Activated CD4-positive, alpha-beta memory T cell treated with anti-CD3 and anti-CD28 coated beads for 36 hours (primary cell): ENCODE measurements at regions of chr17 and their contacts with region 1.

Region 1: DNA sequence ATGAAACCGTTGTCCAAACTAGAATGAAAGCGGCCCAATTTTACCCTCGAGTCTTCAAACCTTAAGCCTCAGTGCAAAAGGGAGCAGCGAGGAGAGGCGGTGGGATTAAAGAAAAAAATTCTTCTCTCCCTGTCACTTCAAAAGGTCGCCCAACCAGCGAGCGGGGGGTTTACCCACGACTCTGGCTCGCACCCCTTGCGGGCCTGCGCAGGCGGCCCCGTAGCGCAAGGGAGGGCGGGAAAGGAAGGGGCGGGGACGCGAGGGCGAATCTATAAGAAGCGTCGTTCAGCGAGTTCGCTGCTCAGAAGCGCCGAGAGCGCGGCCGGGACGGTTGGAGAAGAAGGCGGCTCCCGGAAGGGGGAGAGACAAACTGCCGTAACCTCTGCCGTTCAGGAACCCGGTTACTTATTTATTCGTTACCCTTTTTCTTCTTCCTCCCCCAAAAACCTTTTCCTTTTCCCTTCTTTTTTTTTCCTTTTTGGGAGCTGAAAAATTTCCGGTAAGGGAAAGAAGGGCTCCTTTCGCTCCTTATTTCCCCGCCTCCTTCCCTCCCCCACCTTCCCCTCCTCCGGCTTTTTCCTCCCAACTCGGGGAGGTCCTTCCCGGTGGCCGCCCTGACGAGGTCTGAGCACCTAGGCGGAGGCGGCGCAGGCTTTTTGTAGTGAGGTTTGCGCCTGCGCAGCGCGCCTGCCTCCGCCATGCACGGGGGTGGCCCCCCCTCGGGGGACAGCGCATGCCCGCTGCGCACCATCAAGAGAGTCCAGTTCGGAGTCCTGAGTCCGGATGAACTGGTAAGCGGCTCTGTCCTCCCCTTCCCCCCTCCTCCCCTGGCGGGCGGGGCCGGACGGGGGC is at the start of gene POLR2A:
- DNase-seq: peak; percentile 97
- H3K4me3 Mint-ChIP-seq: peak within 1 kb of the TSS; percentile 98
- H3K27ac Mint-ChIP-seq: peak within 1 kb of the TSS; percentile 100
- H3K4me1 Mint-ChIP-seq: peaks cover 69% of the 10 kb centered on the region
- H3K27me3 Mint-ChIP-seq: no peaks in the 10 kb centered on the region
- total RNA-seq, gene POLR2A: 180 to 187 TPM

Region 2: GRCh38 chr17:7239091-7240027 is 244.9 kb before region 1 on chr17 and contains the start of gene PHF23:
- CTCF ChIA-PET with region 1: no interaction called
- POLR2A ChIA-PET with region 1: no interaction called
- intact Hi-C with region 1: loop called (anchors 1 kb)
- DNase-seq: peak; percentile 99
- H3K4me3 Mint-ChIP-seq: peak within 1 kb of the TSS; percentile 94
- H3K27ac Mint-ChIP-seq: peak within 1 kb of the TSS; percentile 97
- H3K4me1 Mint-ChIP-seq: peaks cover 59% of the 10 kb centered on the region
- H3K27me3 Mint-ChIP-seq: peaks cover 4% of the 10 kb centered on the region
- total RNA-seq, gene PHF23: 24.0 to 28.7 TPM

Region 3: DNA sequence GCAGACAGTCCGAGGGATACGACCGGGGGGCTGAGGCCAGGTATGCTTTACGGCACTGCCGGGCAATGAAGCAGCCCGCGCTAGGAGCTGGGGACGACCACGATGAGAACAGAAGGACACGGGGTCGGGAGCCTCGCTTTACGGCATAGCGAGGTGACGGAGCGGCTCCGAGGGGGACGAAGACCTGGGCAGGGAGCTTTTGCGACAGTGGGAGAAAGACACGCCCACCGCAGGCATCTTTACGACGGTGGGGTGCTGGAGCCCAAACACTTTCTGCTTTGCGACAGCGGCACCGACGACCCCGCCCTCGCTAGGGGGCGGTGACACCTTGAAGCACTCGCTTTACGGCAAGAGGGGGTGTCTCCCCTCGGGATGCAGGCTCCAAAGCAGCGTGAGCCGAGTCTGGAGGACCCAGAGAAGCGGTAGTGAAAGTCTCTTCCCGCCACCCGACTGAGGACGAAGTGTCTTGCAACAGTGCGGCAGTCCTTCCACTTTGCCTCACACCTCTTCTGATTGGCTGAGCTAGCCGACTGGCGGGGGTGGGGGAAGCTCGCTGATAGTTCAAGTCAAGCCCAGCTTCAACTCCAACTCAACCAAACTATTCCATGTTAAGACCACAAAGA is 154.8 kb before region 1 on chr17:
- CTCF ChIA-PET with region 1: interaction called, 4 read pairs
- POLR2A ChIA-PET with region 1: interaction called, 4 read pairs
- intact Hi-C with region 1: loop called (anchors 1 kb)
- DNase-seq: peak; percentile 98
- H3K4me3 Mint-ChIP-seq: peak overlapping the region; percentile 89
- H3K27ac Mint-ChIP-seq: peak overlapping the region; percentile 94
- H3K4me1 Mint-ChIP-seq: peaks cover 41% of the 10 kb centered on the region
- H3K27me3 Mint-ChIP-seq: no peaks in the 10 kb centered on the region

Region 4: DNA sequence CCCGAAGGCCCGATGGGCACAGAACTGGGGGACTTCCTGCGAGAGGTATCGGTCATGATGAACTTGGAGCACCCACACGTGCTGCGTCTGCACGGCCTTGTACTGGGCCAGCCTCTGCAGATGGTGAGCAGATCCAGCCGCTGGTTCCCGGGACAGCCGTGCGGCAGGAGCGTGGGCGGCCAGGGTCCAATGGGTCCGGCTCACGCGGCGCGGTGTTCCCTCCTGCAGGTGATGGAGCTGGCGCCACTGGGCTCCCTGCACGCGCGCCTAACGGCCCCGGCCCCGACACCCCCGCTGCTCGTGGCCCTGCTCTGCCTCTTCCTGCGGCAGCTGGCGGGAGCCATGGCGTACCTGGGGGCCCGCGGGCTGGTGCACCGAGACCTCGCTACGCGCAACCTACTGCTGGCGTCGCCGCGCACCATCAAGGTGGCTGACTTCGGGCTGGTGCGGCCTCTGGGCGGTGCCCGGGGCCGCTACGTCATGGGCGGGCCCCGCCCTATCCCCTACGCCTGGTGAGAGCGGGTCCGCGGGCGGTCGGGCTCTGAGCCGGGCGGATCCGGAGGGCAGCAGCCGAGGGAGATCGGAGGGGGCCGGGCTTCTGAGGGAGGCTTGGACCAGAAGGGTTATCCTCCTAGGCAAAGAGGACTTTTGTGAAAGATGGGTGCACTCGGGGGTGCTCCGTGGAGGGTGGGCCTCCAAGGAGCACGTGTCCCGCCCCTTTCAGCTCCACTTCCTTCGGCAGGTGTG is 100.4 kb before region 1 on chr17:
- CTCF ChIA-PET with region 1: no interaction called
- POLR2A ChIA-PET with region 1: no interaction called
- intact Hi-C with region 1: no loop called
- DNase-seq: peak; percentile 84
- H3K4me3 Mint-ChIP-seq: peak overlapping the region; percentile 74
- H3K27ac Mint-ChIP-seq: peak overlapping the region; percentile 61
- H3K4me1 Mint-ChIP-seq: peaks cover 6% of the 10 kb centered on the region
- H3K27me3 Mint-ChIP-seq: peaks cover 29% of the 10 kb centered on the region

Region 5: DNA sequence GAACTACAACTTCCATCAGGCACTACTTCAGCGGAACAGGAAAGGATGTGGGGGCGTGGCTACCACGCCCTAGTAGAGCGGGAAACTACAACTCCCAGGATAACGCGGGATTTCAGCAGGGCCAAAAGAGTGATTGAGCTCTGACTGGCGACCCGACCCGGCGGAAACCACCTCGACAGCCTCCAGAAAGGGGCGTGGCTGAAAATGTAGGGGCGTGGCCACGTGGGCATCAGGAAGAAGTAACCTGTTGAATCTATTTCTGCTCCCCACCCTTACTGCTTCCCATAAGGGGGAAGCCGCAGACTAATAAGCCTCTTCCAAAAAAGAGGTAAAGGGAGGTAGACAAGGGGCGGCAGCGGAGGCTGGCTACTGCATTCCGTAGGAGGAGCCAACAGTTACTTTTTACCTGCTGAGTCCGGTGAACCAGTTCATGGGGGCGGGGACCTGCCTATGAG is 49.0 kb before region 1 on chr17 and contains the start of gene TMEM102:
- CTCF ChIA-PET with region 1: interaction called, 54 read pairs
- POLR2A ChIA-PET with region 1: interaction called, 25 read pairs
- intact Hi-C with region 1: loop called (anchors 1 kb)
- DNase-seq: peak; percentile 99
- H3K4me3 Mint-ChIP-seq: peak within 1 kb of the TSS; percentile 91
- H3K27ac Mint-ChIP-seq: peak within 1 kb of the TSS; percentile 95
- H3K4me1 Mint-ChIP-seq: peaks cover 36% of the 10 kb centered on the region
- H3K27me3 Mint-ChIP-seq: peaks cover 15% of the 10 kb centered on the region
- total RNA-seq, gene TMEM102: 11.4 to 11.6 TPM

Region 6: GRCh38 chr17:7561028-7561575 is 76.8 kb after region 1 on chr17:
- CTCF ChIA-PET with region 1: interaction called, 11 read pairs
- POLR2A ChIA-PET with region 1: interaction called, 6 read pairs
- intact Hi-C with region 1: loop called (anchors 1 kb)
- DNase-seq: peak; percentile 92
- H3K4me3 Mint-ChIP-seq: peak overlapping the region; percentile 91
- H3K27ac Mint-ChIP-seq: peak overlapping the region; percentile 91
- H3K4me1 Mint-ChIP-seq: peaks cover 32% of the 10 kb centered on the region
- H3K27me3 Mint-ChIP-seq: no peaks in the 10 kb centered on the region

Region 7: DNA sequence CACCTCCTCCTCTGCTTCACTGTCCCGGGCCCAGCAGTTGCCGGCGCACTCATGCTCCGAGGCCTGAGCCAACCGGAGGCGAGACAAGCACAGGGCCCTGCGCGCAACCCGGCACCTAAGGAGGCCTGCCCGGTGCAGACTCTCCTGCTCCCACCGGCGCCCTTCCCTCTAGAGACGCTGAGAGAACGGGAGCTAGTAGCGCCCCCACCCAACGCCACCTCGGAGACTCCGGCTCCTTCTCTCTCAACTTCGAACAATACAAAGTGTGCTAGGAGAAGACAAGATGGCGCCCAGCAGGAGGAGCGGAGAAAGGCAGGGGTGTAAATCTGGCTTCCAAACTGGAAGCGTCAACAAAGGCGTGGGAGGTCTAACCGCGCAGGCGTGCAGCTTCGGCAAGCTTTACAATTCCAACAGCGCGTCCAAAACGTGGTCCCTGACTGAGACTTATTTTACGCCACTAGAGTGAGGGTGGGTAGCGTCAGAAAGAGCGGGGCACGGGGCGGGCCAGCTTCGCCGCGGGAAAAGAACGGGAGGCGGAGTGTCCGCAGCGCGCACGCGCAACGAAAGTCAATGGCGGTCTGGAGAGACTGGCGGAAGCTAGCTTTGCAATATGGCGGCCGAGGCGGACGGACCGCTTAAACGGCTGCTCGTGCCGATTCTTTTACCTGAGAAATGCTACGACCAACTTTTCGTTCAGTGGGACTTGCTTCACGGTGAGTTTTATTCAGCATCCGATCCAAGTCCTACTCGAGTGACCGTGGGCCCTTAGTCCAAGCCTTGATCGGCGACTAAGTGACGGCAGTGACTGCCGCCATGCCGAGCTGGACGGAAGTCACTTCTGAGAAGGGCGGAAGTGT is 99.2 kb after region 1 on chr17 and contains the start of gene MPDU1:
- CTCF ChIA-PET with region 1: interaction called, 4 read pairs
- POLR2A ChIA-PET with region 1: interaction called, 11 read pairs
- intact Hi-C with region 1: no loop called
- DNase-seq: peak; percentile 98
- H3K4me3 Mint-ChIP-seq: peak within 1 kb of the TSS; percentile 95
- H3K27ac Mint-ChIP-seq: peak within 1 kb of the TSS; percentile 100
- H3K4me1 Mint-ChIP-seq: peaks cover 57% of the 10 kb centered on the region
- H3K27me3 Mint-ChIP-seq: no peaks in the 10 kb centered on the region
- total RNA-seq, gene MPDU1: 52.6 to 52.9 TPM

Region 8: GRCh38 chr17:7834962-7835813 is 350.9 kb after region 1 on chr17:
- CTCF ChIA-PET with region 1: no interaction called
- POLR2A ChIA-PET with region 1: no interaction called
- intact Hi-C with region 1: loop called (anchors 1 kb)
- DNase-seq: peak; percentile 95
- H3K4me3 Mint-ChIP-seq: peak overlapping the region; percentile 90
- H3K27ac Mint-ChIP-seq: peak overlapping the region; percentile 95
- H3K4me1 Mint-ChIP-seq: peaks cover 43% of the 10 kb centered on the region
- H3K27me3 Mint-ChIP-seq: no peaks in the 10 kb centered on the region

Region 9: DNA sequence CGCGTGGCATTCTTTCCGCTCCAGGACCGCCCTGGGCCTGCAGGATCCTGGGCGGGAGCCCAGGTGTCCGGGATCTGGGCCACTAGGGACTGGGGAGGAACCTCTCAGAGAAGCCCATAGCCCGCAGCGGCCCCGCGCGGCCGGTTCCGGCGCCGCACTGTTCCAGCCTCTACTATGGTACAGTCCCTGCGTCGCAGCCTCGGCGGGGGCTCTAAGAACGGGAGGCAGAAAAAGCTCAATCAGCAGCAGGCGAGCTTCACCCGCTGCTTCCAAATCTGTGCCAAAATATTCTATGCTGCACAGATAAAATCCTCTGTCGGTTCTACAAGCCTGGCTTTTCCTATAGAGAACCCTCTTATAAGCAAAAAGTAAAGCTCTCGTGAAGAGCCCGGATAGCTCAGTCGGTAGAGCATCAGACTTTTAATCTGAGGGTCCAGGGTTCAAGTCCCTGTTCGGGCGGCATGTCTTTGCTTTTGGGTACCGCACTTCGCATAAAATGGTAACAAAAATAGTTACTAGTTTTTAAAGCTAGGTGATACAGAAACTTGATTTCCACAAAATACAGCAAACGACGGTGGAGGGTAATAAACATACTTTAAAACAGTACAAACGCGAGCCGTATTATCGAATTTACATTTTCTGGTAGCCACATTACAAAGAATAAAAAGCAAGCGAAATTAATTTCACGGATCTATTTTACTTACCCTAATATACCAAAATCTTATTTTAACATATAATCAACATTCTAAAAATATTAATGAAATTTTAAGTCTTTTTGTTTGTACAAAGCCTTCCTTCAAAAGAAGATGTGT is 634.7 kb after region 1 on chr17:
- CTCF ChIA-PET with region 1: no interaction called
- POLR2A ChIA-PET with region 1: no interaction called
- intact Hi-C with region 1: no loop called
- DNase-seq: peak; percentile 90
- H3K4me3 Mint-ChIP-seq: peak overlapping the region; percentile 83
- H3K27ac Mint-ChIP-seq: peak overlapping the region; percentile 91
- H3K4me1 Mint-ChIP-seq: peaks cover 48% of the 10 kb centered on the region
- H3K27me3 Mint-ChIP-seq: peaks cover 56% of the 10 kb centered on the region